Activated B cell treated with CpG ODN at 0.5 μM for 24 hours (primary cell): ENCODE measurements at regions of chr9 and their contacts with region 1.

Region 1: GRCh38 chr9:28045051-28045450 is 471.8 kb upstream of the C9orf72 start:
- DNase-seq: no peak
- ATAC-seq: no peak
- H3K4me3 Mint-ChIP-seq: no peak overlapping the region
- H3K27ac Mint-ChIP-seq: no peak overlapping the region
- H3K4me1 Mint-ChIP-seq: no peaks in the 10 kb centered on the region
- H3K27me3 Mint-ChIP-seq: no peaks in the 10 kb centered on the region
- CTCF ChIP-seq: no peak

Region 2: GRCh38 chr9:27985714-27986113 is 59.3 kb before region 1 on chr9:
- CTCF ChIA-PET with region 1: no interaction called
- POLR2A ChIA-PET with region 1: no interaction called
- intact Hi-C with region 1: loop called (anchors 10 kb)
- DNase-seq: no peak
- ATAC-seq: no peak
- H3K4me3 Mint-ChIP-seq: no peak overlapping the region
- H3K27ac Mint-ChIP-seq: no peak overlapping the region
- H3K4me1 Mint-ChIP-seq: no peaks in the 10 kb centered on the region
- H3K27me3 Mint-ChIP-seq: no peaks in the 10 kb centered on the region
- CTCF ChIP-seq: no peak